ENCODE measurements at regions of chr20 and their contacts with region 1.

Region 1: DNA sequence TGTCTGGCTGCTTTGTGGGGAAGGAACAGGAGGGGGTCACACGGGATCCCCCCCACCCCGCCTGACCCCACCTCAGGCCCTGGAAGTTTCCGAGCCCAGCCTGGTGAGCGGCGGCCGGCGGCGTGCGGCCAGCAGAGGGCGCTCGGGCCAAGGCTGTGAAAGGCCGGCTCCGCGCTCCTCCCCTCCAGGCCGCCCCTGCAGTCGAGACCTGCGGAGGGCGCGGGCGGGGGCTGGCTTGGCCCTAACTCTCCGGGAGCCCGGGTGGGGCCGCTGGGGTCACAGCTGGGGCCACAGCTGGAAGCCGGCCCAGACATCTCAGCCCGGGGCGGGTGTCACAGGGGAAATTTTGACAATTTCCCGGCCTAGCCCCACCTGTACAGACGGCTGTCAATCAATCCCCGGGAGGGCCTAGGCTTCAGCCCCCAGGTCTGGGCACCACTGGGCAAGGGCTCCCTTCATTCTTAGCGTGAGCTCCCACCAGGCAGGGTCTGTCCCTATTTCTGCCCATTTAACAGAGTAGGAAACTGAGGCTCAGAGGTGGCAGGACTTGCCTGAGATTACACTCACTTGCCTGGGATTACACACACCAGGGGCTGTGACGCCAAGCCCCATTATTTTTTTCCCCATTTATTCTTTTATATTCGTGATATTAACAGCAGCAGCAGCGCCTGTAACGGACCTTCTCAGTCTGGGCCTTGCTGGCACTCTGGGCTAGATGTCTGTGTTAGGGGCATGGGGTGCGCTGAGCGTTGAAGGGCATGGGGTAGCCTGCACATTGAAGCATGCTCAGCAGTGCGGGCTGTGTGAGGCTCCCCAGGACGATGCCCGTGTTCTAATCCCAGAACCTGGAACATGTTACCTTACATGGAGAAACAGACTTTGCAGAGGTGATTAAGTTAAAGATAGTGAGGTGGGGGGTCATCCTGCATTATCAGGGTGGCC is 23.0 kb downstream of the ZBP1 start:
- DNase-seq: peak; percentile 53 to 89 (median 75)
- ATAC-seq: peak; percentile 94
- H3K4me3 ChIP-seq: peak overlapping the region; percentile 9 to 29
- H3K4me3 Mint-ChIP-seq: no peak overlapping the region
- H3K27ac ChIP-seq: no peak overlapping the region
- H3K27ac Mint-ChIP-seq: no peak overlapping the region
- H3K4me1 ChIP-seq: peaks cover 8% of the 10 kb centered on the region
- H3K4me1 Mint-ChIP-seq: peaks cover 6% of the 10 kb centered on the region
- H3K27me3 ChIP-seq: peaks cover 0 to 3% of the 10 kb centered on the region in 2 experiments
- H3K27me3 Mint-ChIP-seq: peaks cover 2% of the 10 kb centered on the region
- CTCF ChIP-seq: peak; percentile 81

Region 2: DNA sequence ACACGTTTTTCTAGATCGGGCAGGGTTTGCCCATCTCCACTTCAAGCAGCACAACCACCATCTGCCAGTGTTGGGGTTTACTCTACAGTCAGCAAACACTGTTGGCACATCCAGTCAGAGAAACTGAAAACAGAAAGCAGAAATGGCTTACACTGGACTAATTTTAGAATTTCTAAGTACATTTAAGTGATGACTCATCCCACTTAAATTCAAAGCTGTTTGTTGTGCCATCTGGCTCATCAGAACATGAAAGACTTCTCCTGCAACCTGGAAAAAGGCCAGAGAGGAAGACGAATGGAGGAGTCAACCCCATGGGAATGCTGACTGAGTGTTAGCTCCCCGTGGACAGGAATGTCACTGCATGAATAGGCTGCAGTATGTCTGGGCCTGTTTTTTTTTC is 1042.4 kb before region 1 on chr20:
- CTCF ChIA-PET with region 1: interaction called, 11 read pairs
- POLR2A ChIA-PET with region 1: no interaction called
- intact Hi-C with region 1: loop called in 1 of 2 experiments (anchors 1 kb)
- DNase-seq: peak in 1 of 9 experiments; percentile 3
- ATAC-seq: no peak
- H3K4me3 ChIP-seq: no peak overlapping the region
- H3K4me3 Mint-ChIP-seq: no peak overlapping the region
- H3K27ac ChIP-seq: no peak overlapping the region
- H3K27ac Mint-ChIP-seq: no peak overlapping the region
- H3K4me1 ChIP-seq: no peaks in the 10 kb centered on the region
- H3K4me1 Mint-ChIP-seq: no peaks in the 10 kb centered on the region
- H3K27me3 ChIP-seq: no peaks in the 10 kb centered on the region
- H3K27me3 Mint-ChIP-seq: peaks cover 2% of the 10 kb centered on the region
- CTCF ChIP-seq: no peak

Region 3: DNA sequence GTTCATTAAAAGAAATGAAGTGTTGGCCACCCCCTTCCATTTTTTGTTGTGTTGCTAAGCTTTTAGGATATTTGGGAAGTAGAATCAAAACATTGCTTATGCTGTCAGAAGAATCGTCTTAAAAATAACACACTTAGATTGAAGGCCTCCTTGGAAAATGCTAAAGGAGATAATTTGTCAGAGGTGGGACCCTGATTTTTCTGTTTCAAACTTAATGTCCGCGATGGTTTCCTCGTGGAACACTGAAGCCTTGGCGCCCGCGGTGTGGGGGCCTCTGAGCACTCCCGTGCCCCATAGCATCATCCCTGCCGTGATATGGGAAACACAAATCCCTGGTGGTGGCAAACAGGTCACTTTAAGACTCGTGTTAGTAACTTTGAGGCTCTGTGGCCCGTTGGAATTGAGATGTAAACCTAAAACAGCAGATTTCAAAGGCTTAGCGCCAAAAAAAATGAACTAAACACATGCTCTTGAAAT is 215.2 kb before region 1 on chr20:
- CTCF ChIA-PET with region 1: interaction called, 7 read pairs
- POLR2A ChIA-PET with region 1: no interaction called
- intact Hi-C with region 1: loop called (anchors 1 kb)
- DNase-seq: no peak
- ATAC-seq: no peak
- H3K4me3 ChIP-seq: no peak overlapping the region
- H3K4me3 Mint-ChIP-seq: no peak overlapping the region
- H3K27ac ChIP-seq: no peak overlapping the region
- H3K27ac Mint-ChIP-seq: peak overlapping the region; percentile 66
- H3K4me1 ChIP-seq: peaks cover 12% of the 10 kb centered on the region
- H3K4me1 Mint-ChIP-seq: peaks cover 22% of the 10 kb centered on the region
- H3K27me3 ChIP-seq: no peaks in the 10 kb centered on the region
- H3K27me3 Mint-ChIP-seq: no peaks in the 10 kb centered on the region
- CTCF ChIP-seq: no peak

Region 4: GRCh38 chr20:57586370-57586793 is 10.9 kb before region 1 on chr20:
- CTCF ChIA-PET with region 1: interaction called, 18 read pairs
- POLR2A ChIA-PET with region 1: no interaction called
- intact Hi-C with region 1: no loop called
- DNase-seq: no peak
- ATAC-seq: no peak
- H3K4me3 ChIP-seq: no peak overlapping the region
- H3K4me3 Mint-ChIP-seq: no peak overlapping the region
- H3K27ac ChIP-seq: no peak overlapping the region
- H3K27ac Mint-ChIP-seq: no peak overlapping the region
- H3K4me1 ChIP-seq: no peaks in the 10 kb centered on the region
- H3K4me1 Mint-ChIP-seq: no peaks in the 10 kb centered on the region
- H3K27me3 ChIP-seq: no peaks in the 10 kb centered on the region
- H3K27me3 Mint-ChIP-seq: peaks cover 44% of the 10 kb centered on the region
- CTCF ChIP-seq: no peak

Region 5: DNA sequence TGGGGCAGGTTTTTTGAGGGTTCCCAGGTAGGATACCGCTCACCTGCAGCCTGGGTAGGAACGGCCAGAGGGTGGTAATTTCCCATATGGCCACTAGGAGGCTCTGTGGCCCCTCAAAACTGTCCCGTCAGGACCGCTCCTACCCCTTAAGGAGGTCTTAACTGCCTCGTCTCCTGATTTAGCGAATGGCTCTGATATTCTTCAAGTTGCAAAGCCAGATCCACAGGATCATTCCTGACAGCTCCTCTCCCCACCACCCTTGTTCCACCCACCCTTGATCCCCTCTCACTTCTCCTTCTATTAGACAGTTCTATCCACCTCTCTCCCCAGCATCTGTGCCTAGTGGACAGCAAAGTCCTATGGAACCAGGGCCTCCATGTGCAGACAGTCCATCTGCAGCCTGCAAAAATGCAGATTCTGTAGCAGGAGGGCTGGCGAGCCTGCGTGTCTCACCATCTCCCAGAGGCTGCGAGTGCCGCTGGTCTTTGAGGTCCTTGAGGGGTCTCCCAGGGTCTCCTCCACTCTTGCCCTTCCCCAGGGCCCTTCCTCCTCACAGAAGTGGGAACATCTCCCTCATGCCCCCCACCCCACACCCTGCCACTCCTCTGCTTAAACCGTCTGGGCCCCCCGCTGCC is 57.2 kb after region 1 on chr20:
- CTCF ChIA-PET with region 1: interaction called, 56 read pairs
- POLR2A ChIA-PET with region 1: interaction called, 3 read pairs
- intact Hi-C with region 1: loop called (anchors 1 kb)
- DNase-seq: peak; percentile 32 to 82 (median 62)
- ATAC-seq: peak; percentile 74
- H3K4me3 ChIP-seq: no peak overlapping the region
- H3K4me3 Mint-ChIP-seq: no peak overlapping the region
- H3K27ac ChIP-seq: no peak overlapping the region
- H3K27ac Mint-ChIP-seq: no peak overlapping the region
- H3K4me1 ChIP-seq: peaks cover 39% of the 10 kb centered on the region
- H3K4me1 Mint-ChIP-seq: peaks cover 38% of the 10 kb centered on the region
- H3K27me3 ChIP-seq: no peaks in the 10 kb centered on the region
- H3K27me3 Mint-ChIP-seq: no peaks in the 10 kb centered on the region
- CTCF ChIP-seq: peak; percentile 94

Region 6: GRCh38 chr20:58179432-58180099 is 582.3 kb after region 1 on chr20:
- CTCF ChIA-PET with region 1: interaction called, 50 read pairs
- POLR2A ChIA-PET with region 1: no interaction called
- intact Hi-C with region 1: loop called in 1 of 2 experiments (anchors 1 kb)
- DNase-seq: peak; percentile 52 to 83 (median 66)
- ATAC-seq: peak; percentile 98
- H3K4me3 ChIP-seq: peak overlapping the region; percentile 26 to 48
- H3K4me3 Mint-ChIP-seq: peak overlapping the region; percentile 68
- H3K27ac ChIP-seq: no peak overlapping the region
- H3K27ac Mint-ChIP-seq: no peak overlapping the region
- H3K4me1 ChIP-seq: peaks cover 9% of the 10 kb centered on the region
- H3K4me1 Mint-ChIP-seq: peaks cover 8% of the 10 kb centered on the region
- H3K27me3 ChIP-seq: peaks cover 3 to 6% of the 10 kb centered on the region in 2 experiments
- H3K27me3 Mint-ChIP-seq: peaks cover 24% of the 10 kb centered on the region
- CTCF ChIP-seq: peak; percentile 100